Heart right ventricle (tissue), 16 donors: ENCODE measurements at regions of chrX and their contacts with region 1.

Region 1: DNA sequence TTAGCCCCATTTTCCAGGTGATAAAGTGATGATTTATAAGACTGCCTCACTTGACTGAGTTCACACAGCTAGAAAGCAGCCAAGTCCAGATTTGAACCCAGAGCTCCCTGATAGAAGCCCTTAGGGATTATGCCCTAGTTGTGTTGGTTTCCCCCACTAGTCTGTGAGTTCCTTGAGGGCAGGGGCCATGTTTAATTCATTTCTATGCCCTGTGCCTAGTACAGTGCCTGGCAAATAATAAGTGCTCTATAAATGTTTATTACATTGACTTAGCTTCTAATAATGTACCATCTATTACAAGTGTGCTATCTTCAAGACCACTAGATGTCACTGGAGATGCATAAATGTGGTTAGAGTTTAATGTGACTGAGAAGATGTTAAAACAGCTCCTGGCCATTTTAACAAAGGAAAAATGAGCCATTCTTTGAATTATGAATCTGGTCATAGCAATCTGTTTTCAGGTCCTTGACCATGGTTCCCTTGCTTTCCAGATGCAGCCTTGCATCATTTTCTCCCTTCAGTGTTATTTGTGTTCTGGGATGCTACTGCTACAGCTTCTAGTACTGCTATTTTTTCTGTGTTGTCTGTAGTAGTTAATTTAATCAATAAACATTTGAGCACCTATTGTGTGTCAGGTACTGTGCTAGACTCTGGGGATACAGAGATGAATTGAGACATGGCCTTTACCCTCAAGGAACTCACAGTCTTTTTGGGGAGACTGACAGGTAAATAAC is 43.2 kb downstream of the SLC9A6 start:
- DNase-seq: peak in 1 of 2 donors; percentile 11
- ATAC-seq: peak; percentile 30 to 61 (median 47)
- H3K4me3 ChIP-seq: no peak overlapping the region
- H3K27ac ChIP-seq: peak overlapping the region in 7 of 10 donors; percentile 12 to 91 (median 85)
- H3K4me1 ChIP-seq: peaks cover 0 to 43% (median 10%) of the 10 kb centered on the region in 9 donors
- H3K27me3 ChIP-seq: peaks cover 0 to 20% (median 0%) of the 10 kb centered on the region in 7 donors
- CTCF ChIP-seq: peak; percentile 28 to 71 (median 62)

Region 2: DNA sequence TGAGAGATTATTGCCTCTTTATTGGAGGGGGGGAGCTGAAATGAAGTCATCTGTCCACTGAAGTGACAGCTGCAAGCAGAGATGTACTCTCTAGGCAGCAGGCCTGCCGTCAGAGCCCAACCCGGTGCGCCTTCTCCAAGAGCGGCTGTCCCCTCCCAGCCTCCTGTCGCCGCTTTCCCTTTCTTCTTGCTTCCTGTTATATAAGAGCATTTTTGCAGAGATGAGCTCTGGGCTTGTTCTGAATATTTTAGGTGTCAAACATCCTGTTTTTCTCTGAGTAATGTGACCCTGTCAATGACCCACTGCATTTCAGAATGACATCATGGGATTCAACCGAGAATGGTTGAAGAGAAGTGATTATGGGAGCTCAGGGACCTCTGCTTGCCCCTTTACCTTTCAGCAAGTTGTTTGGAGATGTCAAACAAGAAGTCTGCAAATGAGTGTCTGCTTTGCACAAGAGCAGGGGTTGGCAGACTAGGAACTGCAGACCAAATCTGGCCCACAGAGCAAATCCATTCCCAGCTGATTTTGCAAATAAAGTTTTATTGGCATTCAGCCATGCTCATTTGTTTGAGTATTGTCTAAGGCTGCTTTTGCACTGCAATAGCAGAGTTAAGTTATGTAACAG is 36.7 kb after region 1 on chrX:
- intact Hi-C with region 1: no loop called
- DNase-seq: peak; percentile 40 to 65
- ATAC-seq: peak in 7 of 8 donors; percentile 75 to 87 (median 85)
- H3K4me3 ChIP-seq: no peak overlapping the region
- H3K27ac ChIP-seq: peak overlapping the region in 8 of 10 donors; percentile 7 to 72 (median 58)
- H3K4me1 ChIP-seq: peaks cover 0 to 24% (median 9%) of the 10 kb centered on the region in 9 donors
- H3K27me3 ChIP-seq: peaks cover 0 to 5% (median 0%) of the 10 kb centered on the region in 7 donors
- CTCF ChIP-seq: no peak

Region 3: DNA sequence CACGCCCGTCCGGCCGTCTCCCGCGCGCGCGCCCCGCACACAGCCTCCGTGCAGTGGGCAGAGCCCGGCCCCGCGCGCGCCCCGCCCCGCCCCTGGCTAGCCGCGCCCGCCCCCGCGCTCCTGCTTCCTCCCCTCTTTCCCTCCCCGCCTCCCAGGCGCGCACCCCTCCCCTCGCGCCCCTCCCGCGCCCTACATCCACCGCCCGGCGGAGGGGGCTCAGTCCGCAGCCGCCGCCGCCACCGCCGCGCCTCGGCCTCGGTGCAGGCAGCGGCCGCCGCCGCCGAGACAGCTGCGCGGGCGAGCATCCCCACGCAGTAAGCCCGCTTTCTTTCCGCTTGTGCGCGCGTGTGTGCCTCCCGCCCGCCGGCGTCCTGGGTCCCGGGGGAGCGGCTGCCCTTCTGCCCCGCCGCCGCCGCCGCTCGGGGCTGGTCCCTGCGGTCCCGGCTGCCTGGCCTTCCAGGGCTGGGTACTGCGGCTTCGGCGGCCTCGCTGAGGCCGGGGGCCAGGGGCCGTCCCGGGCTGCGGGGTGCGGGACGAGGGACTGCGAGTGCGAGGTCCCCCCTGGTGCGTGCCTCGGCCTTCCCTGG is 119.0 kb after region 1 on chrX and contains the start of gene FHL1:
- intact Hi-C with region 1: loop called in 2 of 10 experiments (anchors 5 kb)
- DNase-seq: peak; percentile 67 to 76
- ATAC-seq: peak; percentile 79 to 96 (median 90)
- H3K4me3 ChIP-seq: peak within 1 kb of the TSS; percentile 44 to 84 (median 67)
- H3K27ac ChIP-seq: peak within 1 kb of the TSS; percentile 84 to 96 (median 91)
- H3K4me1 ChIP-seq: peaks cover 0 to 9% (median 0%) of the 10 kb centered on the region in 9 donors
- H3K27me3 ChIP-seq: peaks cover 0 to 36% (median 0%) of the 10 kb centered on the region in 7 donors
- CTCF ChIP-seq: no peak
- total RNA-seq, gene FHL1: 367 to 3,919 (median 2,586) TPM

Region 4: GRCh38 chrX:136168929-136169735 is 140.7 kb after region 1 on chrX:
- intact Hi-C with region 1: loop called in 5 of 10 experiments (anchors 5 kb)
- DNase-seq: peak; percentile 28 to 73
- ATAC-seq: peak; percentile 79 to 89 (median 85)
- H3K4me3 ChIP-seq: peak overlapping the region in 5 of 10 donors; percentile 5 to 26 (median 13)
- H3K27ac ChIP-seq: peak overlapping the region; percentile 74 to 89 (median 84)
- H3K4me1 ChIP-seq: peaks cover 0 to 87% (median 28%) of the 10 kb centered on the region in 9 donors
- H3K27me3 ChIP-seq: peaks cover 0 to 24% (median 0%) of the 10 kb centered on the region in 7 donors
- CTCF ChIP-seq: no peak

Region 5: GRCh38 chrX:136214551-136214950 is 186.1 kb after region 1 on chrX:
- intact Hi-C with region 1: loop called in 7 of 10 experiments (anchors 2 to 5 kb)
- DNase-seq: no peak
- ATAC-seq: peak in 1 of 8 donors; percentile 18
- H3K4me3 ChIP-seq: no peak overlapping the region
- H3K27ac ChIP-seq: peak overlapping the region in 1 of 10 donors; percentile 9
- H3K4me1 ChIP-seq: peaks cover 0 to 12% (median 0%) of the 10 kb centered on the region in 9 donors
- H3K27me3 ChIP-seq: peaks cover 0 to 15% (median 0%) of the 10 kb centered on the region in 7 donors
- CTCF ChIP-seq: no peak

Region 6: GRCh38 chrX:136577552-136577951 is 549.1 kb after region 1 on chrX:
- intact Hi-C with region 1: loop called in 4 of 10 experiments (anchors 5 to 10 kb)
- DNase-seq: peak; percentile 29 to 38
- ATAC-seq: peak in 7 of 8 donors; percentile 61 to 92 (median 82)
- H3K4me3 ChIP-seq: no peak overlapping the region
- H3K27ac ChIP-seq: no peak overlapping the region
- H3K4me1 ChIP-seq: peaks cover 0 to 11% (median 4%) of the 10 kb centered on the region in 9 donors
- H3K27me3 ChIP-seq: peaks cover 0 to 19% (median 0%) of the 10 kb centered on the region in 7 donors
- CTCF ChIP-seq: peak; percentile 22 to 70 (median 64)